Activated naive CD8-positive, alpha-beta T cell treated with anti-CD3 and anti-CD28 coated beads, Interleukin-2, amount 10 ng/mL, durations not matched to agents 7 days and 5 days (primary cell): ENCODE measurements at regions of chr16 and their contacts with region 1.

Region 1: DNA sequence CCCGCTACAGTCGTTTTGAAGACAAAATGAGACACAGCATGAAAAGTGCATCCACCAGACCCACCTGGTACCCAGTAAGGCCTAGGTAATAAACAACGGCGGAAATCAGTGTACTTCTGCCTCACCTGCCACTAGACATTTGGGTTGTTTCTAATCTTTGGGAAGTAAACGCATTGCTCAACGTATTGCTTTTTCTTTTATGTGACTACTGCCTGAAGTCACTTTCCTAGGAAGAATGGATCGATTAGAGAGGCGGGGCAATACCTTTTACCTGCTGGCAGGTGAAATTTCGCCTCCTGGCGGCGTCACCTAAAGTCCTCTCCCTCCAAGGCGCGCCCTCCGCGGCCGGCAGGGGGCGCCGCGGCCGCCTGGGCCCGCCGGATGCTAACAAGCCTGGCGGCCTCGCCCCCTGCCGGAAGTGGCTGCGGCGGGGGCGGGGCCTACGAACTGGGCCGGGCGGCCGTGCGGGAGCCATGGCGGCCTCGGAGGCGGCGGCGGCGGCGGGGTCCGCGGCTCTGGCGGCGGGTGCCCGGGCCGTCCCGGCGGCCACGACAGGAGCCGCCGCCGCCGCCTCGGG is at the start of gene ATMIN:
- DNase-seq: peak; percentile 97
- ATAC-seq: peak; percentile 94
- H3K4me3 Mint-ChIP-seq: peak within 1 kb of the TSS; percentile 86
- H3K27ac Mint-ChIP-seq: peak within 1 kb of the TSS; percentile 65
- H3K4me1 Mint-ChIP-seq: peaks cover 25% of the 10 kb centered on the region
- H3K27me3 Mint-ChIP-seq: no peaks in the 10 kb centered on the region
- total RNA-seq, gene ATMIN: 28.3 to 29.3 TPM

Region 2: GRCh38 chr16:81006814-81007696 is 28.4 kb before region 1 on chr16 and contains the starts of genes CENPN and CMC2:
- POLR2A ChIA-PET with region 1: interaction called, 15 read pairs
- DNase-seq: peak; percentile 98
- ATAC-seq: peak; percentile 83
- H3K4me3 Mint-ChIP-seq: peak within 1 kb of the TSS; percentile 95
- H3K27ac Mint-ChIP-seq: peak within 1 kb of the TSS; percentile 100
- H3K4me1 Mint-ChIP-seq: peaks cover 41% of the 10 kb centered on the region
- H3K27me3 Mint-ChIP-seq: no peaks in the 10 kb centered on the region
- total RNA-seq, gene CENPN: 39.4 to 47.0 TPM
- total RNA-seq, gene CMC2: 72.3 to 73.0 TPM

Region 3: DNA sequence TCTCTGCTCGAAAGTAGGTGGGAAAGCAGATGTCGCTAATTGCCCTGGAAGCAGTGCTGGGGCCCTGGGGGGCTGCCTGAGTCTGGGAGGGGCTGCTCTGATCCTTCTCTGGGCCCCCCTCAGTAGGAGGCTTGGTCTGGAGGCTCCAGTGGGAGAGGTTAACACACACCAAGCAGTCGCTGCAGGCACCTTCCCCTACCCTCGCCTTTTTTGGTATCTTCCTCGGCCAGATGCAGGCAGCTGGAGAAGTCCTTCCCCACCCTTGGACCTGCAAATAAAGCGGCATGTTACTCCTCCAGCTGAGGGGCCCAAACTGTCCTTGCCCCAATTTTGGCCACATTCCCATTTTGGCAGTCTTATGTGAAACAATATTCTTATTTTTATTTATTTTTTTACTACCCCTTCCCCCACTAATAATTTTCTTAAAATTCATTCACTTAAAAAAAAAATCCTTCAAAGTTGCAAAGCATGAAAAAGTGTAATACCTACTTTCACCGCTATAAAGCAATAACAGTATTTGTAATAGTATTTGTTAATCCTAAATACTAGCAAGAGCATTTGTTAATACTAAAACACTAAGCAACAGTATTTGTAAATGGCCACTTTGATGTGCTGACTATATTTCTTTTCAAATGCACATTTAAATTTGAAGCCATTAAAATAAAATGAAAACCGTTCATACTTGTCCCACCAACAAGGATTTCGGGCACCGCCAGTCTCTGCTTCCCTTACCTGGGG is 26.6 kb after region 1 on chr16:
- POLR2A ChIA-PET with region 1: no interaction called
- DNase-seq: no peak
- ATAC-seq: no peak
- H3K4me3 Mint-ChIP-seq: no peak overlapping the region
- H3K27ac Mint-ChIP-seq: no peak overlapping the region
- H3K4me1 Mint-ChIP-seq: peaks cover 11% of the 10 kb centered on the region
- H3K27me3 Mint-ChIP-seq: no peaks in the 10 kb centered on the region